Activated CD4-positive, alpha-beta memory T cell treated with anti-CD3 and anti-CD28 coated beads, Interleukin-2, amount 10 ng/mL, durations not matched to agents 7 days and 5 days (primary cell): ENCODE measurements at regions of chr12 and their contacts with region 1.

Region 1: DNA sequence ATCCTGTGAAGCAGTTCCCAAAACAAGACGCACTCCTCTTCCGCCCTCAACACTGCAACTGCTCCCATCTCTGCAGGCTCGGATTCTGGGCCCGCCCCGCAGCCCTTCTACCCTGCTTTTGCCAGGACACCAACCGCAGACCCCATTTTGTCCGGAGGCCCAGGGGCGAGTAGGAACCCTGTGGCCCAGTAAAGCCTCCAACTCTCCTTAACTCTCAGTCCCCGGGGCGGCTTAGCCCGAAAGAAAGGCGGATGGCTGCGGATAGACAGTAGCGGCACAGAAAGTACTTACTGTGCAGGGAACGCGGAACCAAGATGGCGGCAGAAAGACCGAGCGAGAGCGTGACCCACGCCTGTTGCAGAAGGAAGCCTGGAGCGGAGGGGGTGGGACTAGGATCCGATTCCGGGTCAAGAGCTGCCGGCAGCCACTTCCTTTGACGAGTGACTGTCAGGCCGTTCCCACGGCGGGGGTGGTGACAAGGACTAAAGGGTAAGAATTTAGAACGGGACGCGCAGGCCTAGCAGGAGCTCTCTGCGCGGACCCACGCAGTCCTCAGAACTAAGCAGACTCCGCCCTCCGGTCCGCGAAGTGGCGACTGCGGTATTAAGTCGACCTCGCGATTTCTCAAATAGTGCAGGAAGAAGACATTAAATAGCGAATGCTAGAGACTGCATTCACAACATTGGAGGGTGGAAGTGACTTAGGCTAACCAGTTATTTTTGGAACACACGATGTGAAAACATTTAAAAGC is at the start of gene NACA:
- DNase-seq: peak; percentile 99
- H3K4me3 Mint-ChIP-seq: peak within 1 kb of the TSS; percentile 94
- H3K27ac Mint-ChIP-seq: peak within 1 kb of the TSS; percentile 97
- H3K4me1 Mint-ChIP-seq: peaks cover 49% of the 10 kb centered on the region
- H3K27me3 Mint-ChIP-seq: no peaks in the 10 kb centered on the region
- total RNA-seq, gene NACA: 826 to 860 TPM

Region 2: GRCh38 chr12:56288456-56289387 is 436.4 kb before region 1 on chr12:
- CTCF ChIA-PET with region 1: no interaction called
- POLR2A ChIA-PET with region 1: no interaction called
- DNase-seq: no peak
- H3K4me3 Mint-ChIP-seq: no peak overlapping the region
- H3K27ac Mint-ChIP-seq: peak overlapping the region; percentile 62
- H3K4me1 Mint-ChIP-seq: peaks cover 31% of the 10 kb centered on the region
- H3K27me3 Mint-ChIP-seq: no peaks in the 10 kb centered on the region

Region 3: GRCh38 chr12:56630160-56630632 is 95.0 kb before region 1 on chr12 and contains the start of gene BAZ2A:
- CTCF ChIA-PET with region 1: no interaction called
- POLR2A ChIA-PET with region 1: interaction called, 16 read pairs
- DNase-seq: peak; percentile 91
- H3K4me3 Mint-ChIP-seq: peak within 1 kb of the TSS; percentile 92
- H3K27ac Mint-ChIP-seq: peak within 1 kb of the TSS; percentile 86
- H3K4me1 Mint-ChIP-seq: peaks cover 69% of the 10 kb centered on the region
- H3K27me3 Mint-ChIP-seq: no peaks in the 10 kb centered on the region
- total RNA-seq, gene BAZ2A: 121 to 126 TPM

Region 4: GRCh38 chr12:56636675-56637540 is 88.2 kb before region 1 on chr12:
- CTCF ChIA-PET with region 1: interaction called, 8 read pairs
- POLR2A ChIA-PET with region 1: interaction called, 17 read pairs
- DNase-seq: peak; percentile 92
- H3K4me3 Mint-ChIP-seq: peak overlapping the region; percentile 96
- H3K27ac Mint-ChIP-seq: peak overlapping the region; percentile 80
- H3K4me1 Mint-ChIP-seq: peaks cover 59% of the 10 kb centered on the region
- H3K27me3 Mint-ChIP-seq: no peaks in the 10 kb centered on the region

Region 5: DNA sequence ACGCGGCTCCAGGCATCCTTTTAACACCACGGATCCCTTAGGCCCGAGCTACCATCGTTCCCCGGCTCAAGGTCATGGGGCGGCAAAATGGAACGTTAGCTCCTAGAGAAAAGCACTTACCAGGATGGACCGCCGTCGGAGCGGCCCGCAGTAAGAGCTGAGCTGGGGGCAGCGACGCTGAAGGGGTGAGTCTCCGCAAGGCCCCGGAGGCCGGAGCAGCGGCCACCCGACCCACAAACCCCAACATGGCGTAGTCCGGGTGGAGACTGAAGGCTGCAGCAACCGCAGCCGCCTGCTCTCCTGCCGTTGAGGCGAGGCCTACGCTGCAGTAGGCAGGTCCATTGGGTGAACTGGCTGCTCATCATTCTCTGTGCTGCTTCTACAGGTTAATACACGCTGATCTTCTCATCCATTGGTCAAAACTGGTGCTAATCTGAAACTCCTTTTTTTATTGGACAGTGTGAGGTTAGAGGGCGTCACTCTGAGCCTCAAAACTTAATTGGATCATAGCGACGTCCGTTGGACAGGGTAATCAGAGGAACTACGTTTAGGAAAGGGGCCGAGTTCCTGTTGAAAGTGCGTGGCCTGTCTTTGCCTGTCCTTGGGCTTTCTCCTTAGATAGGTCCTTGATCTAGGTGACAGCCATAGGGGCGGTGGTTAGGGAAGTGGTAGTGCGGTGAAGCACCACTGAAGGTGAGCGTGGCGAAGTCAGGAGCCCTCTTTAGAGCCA is 79.3 kb before region 1 on chr12 and contains the start of gene ATP5F1B:
- CTCF ChIA-PET with region 1: no interaction called
- POLR2A ChIA-PET with region 1: interaction called, 27 read pairs
- DNase-seq: peak; percentile 95
- H3K4me3 Mint-ChIP-seq: peak within 1 kb of the TSS; percentile 90
- H3K27ac Mint-ChIP-seq: peak within 1 kb of the TSS; percentile 95
- H3K4me1 Mint-ChIP-seq: peaks cover 35% of the 10 kb centered on the region
- H3K27me3 Mint-ChIP-seq: no peaks in the 10 kb centered on the region
- total RNA-seq, gene ATP5F1B: 529 to 549 TPM

Region 6: DNA sequence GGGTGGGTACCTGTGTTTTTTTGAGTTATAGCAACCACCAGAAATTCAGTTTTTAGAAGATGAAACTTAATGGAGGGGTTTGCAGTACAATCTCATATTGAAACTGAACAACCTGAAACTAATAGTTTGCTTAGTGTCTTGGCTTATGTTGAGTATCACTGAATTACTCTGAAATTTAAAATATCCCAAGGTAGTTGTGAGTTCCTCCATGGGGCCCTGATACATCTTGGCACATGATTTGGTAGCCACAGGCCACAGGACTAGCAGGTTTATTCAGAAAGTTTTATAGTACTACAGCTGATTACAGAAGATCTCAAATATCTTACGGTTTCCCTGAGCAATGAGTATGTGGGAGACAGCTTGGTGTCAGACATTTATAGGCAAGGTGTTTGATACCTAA is 47.5 kb before region 1 on chr12:
- CTCF ChIA-PET with region 1: no interaction called
- POLR2A ChIA-PET with region 1: interaction called, 155 read pairs
- DNase-seq: no peak
- H3K4me3 Mint-ChIP-seq: no peak overlapping the region
- H3K27ac Mint-ChIP-seq: peak overlapping the region; percentile 21
- H3K4me1 Mint-ChIP-seq: peaks cover 69% of the 10 kb centered on the region
- H3K27me3 Mint-ChIP-seq: no peaks in the 10 kb centered on the region

Region 7: GRCh38 chr12:56751712-56752598 is 26.8 kb after region 1 on chr12 and contains the start of gene PRIM1:
- CTCF ChIA-PET with region 1: interaction called, 7 read pairs
- POLR2A ChIA-PET with region 1: interaction called, 72 read pairs
- DNase-seq: peak; percentile 89
- H3K4me3 Mint-ChIP-seq: peak within 1 kb of the TSS; percentile 99
- H3K27ac Mint-ChIP-seq: peak within 1 kb of the TSS; percentile 97
- H3K4me1 Mint-ChIP-seq: peaks cover 50% of the 10 kb centered on the region
- H3K27me3 Mint-ChIP-seq: no peaks in the 10 kb centered on the region
- total RNA-seq, gene PRIM1: 45.0 to 46.2 TPM